Activated naive CD4-positive, alpha-beta T cell treated with anti-CD3 and anti-CD28 coated beads, Interleukin-2, amount 10 ng/mL, durations not matched to agents 7 days and 5 days (primary cell): ENCODE measurements at regions of chr15 and their contacts with region 1.

Region 1: GRCh38 chr15:38647683-38648082 is 83.1 kb upstream of the RASGRP1 start:
- DNase-seq: no peak
- H3K4me3 Mint-ChIP-seq: no peak overlapping the region
- H3K27ac Mint-ChIP-seq: no peak overlapping the region
- H3K4me1 Mint-ChIP-seq: peaks cover 81% of the 10 kb centered on the region
- H3K27me3 Mint-ChIP-seq: no peaks in the 10 kb centered on the region

Region 2: GRCh38 chr15:38414357-38414756 is 233.3 kb before region 1 on chr15:
- CTCF ChIA-PET with region 1: no interaction called
- DNase-seq: peak; percentile 27
- H3K4me3 Mint-ChIP-seq: no peak overlapping the region
- H3K27ac Mint-ChIP-seq: no peak overlapping the region
- H3K4me1 Mint-ChIP-seq: no peaks in the 10 kb centered on the region
- H3K27me3 Mint-ChIP-seq: peaks cover 41% of the 10 kb centered on the region

Region 3: GRCh38 chr15:38461066-38461833 is 186.4 kb before region 1 on chr15:
- CTCF ChIA-PET with region 1: no interaction called
- DNase-seq: no peak
- H3K4me3 Mint-ChIP-seq: no peak overlapping the region
- H3K27ac Mint-ChIP-seq: no peak overlapping the region
- H3K4me1 Mint-ChIP-seq: peaks cover 34% of the 10 kb centered on the region
- H3K27me3 Mint-ChIP-seq: no peaks in the 10 kb centered on the region

Region 4: DNA sequence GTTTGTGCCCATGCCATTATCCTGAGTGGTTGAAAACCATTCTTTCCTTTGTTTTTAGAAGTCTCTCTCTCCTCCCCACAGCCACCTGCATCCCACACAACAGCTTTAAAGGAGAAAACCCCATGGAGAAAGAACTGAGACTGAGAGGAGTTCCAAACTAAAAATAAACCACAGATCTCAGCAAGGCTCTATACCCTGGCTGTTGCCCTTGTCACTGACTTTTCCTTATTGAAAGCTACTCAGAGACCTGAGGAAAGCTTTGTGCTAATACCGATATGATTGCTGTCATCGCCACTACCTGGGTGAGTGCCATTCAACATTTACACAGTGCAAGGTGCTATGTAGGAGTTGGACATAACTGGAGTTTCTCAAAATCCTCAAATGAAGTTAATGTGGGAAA is 27.6 kb before region 1 on chr15:
- CTCF ChIA-PET with region 1: no interaction called
- DNase-seq: no peak
- H3K4me3 Mint-ChIP-seq: no peak overlapping the region
- H3K27ac Mint-ChIP-seq: no peak overlapping the region
- H3K4me1 Mint-ChIP-seq: peaks cover 11% of the 10 kb centered on the region
- H3K27me3 Mint-ChIP-seq: peaks cover 20% of the 10 kb centered on the region

Region 5: GRCh38 chr15:38631126-38632075 is 16.3 kb before region 1 on chr15:
- CTCF ChIA-PET with region 1: interaction called, 13 read pairs
- DNase-seq: no peak
- H3K4me3 Mint-ChIP-seq: no peak overlapping the region
- H3K27ac Mint-ChIP-seq: peak overlapping the region; percentile 76
- H3K4me1 Mint-ChIP-seq: peaks cover 40% of the 10 kb centered on the region
- H3K27me3 Mint-ChIP-seq: peaks cover 4% of the 10 kb centered on the region

Region 6: DNA sequence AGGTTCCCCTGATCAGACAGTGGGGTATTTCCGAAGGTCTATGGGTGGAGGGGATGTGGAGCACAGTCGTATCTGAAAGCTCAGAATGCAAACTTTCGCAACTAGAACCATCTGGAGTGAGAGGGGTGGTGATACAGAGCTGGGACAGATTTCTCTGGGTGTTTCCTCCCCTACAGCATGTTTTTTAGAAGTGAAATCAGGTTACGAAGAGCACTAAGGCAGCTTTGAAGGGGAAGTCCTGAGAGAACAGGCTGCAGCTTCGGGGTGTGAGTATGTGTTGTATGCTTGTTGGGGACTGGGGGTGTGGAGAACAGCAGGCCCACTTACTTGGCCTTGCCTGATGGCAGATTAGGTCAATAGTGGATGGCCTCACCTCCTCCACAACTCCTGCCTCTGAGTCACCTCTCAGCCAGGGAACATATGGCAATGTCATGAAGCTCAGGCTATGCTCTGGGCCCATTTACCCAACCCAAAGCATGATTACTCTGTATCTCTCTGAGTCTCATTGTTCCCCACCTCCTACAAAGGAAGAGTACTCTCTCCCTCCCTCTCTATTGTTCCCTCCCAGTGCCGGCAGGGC is 24.1 kb after region 1 on chr15:
- CTCF ChIA-PET with region 1: interaction called, 76 read pairs
- DNase-seq: peak; percentile 61
- H3K4me3 Mint-ChIP-seq: peak overlapping the region; percentile 53
- H3K27ac Mint-ChIP-seq: peak overlapping the region; percentile 98
- H3K4me1 Mint-ChIP-seq: peaks cover 80% of the 10 kb centered on the region
- H3K27me3 Mint-ChIP-seq: no peaks in the 10 kb centered on the region